Adrenal gland (tissue), 19 donors: ENCODE measurements at regions of chr17 and their contacts with region 1.

Region 1: GRCh38 chr17:78617511-78618061 is 40.4 kb upstream of the DNAH17 start:
- DNase-seq: peak in 1 of 7 donors; percentile 55
- H3K4me3 ChIP-seq: no peak overlapping the region
- H3K27ac ChIP-seq: peak overlapping the region in 1 of 5 donors; percentile 71
- H3K4me1 ChIP-seq: no peaks in the 10 kb centered on the region
- H3K27me3 ChIP-seq: no peaks in the 10 kb centered on the region
- CTCF ChIP-seq: no peak
- POLR2A ChIP-seq: no peak

Region 2: GRCh38 chr17:78568494-78569115 is 49.0 kb before region 1 on chr17:
- intact Hi-C with region 1: loop called in 1 of 2 experiments (anchors 5 kb)
- DNase-seq: peak in 1 of 7 donors; percentile 41
- H3K4me3 ChIP-seq: no peak overlapping the region
- H3K27ac ChIP-seq: no peak overlapping the region
- H3K4me1 ChIP-seq: no peaks in the 10 kb centered on the region
- H3K27me3 ChIP-seq: no peaks in the 10 kb centered on the region
- CTCF ChIP-seq: no peak
- POLR2A ChIP-seq: no peak